HEK293 (cell line): ENCODE measurements at regions of chr16 and their contacts with region 1.

Region 1: DNA sequence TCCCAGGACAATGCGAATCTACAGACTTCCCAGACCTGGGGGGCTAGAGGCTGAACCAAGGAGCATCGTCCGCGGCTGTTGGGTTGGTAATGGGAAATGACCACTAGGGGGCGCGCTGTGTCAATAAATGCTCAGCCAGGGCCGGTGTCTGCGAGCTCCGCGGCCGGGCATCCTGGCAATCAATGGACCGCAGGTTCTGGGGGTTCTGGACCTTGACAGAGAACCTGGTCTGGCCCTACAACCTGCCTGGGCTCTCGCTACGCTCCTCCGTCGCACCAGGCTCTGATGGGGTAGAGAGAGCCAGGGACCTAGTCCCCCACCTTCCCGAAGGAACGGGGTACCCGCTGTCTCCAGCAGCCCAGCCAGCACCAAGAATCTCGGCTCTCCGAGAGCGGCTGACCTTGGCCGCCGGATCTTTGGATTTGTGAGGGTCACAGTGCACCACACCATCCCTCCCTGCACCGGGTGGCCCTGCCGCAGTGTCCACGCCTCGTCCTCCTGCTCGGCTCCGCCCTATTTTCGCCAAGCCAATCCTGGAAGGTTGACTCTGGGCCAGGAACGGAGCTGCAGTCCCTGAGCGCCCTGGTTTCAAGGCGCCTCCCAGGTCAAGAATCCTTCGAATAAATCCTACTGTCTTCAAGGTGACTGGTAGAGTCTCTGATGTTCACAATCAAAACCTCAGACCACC is 20.4 kb upstream of the BEAN1 start:
- H3K4me3 ChIP-seq: peak overlapping the region; percentile 51
- H3K27ac ChIP-seq: no peak overlapping the region
- H3K4me1 ChIP-seq: no peaks in the 10 kb centered on the region; the same call in 1 of the 2 replicates
- CTCF ChIP-seq: peak; percentile 93

Region 2: DNA sequence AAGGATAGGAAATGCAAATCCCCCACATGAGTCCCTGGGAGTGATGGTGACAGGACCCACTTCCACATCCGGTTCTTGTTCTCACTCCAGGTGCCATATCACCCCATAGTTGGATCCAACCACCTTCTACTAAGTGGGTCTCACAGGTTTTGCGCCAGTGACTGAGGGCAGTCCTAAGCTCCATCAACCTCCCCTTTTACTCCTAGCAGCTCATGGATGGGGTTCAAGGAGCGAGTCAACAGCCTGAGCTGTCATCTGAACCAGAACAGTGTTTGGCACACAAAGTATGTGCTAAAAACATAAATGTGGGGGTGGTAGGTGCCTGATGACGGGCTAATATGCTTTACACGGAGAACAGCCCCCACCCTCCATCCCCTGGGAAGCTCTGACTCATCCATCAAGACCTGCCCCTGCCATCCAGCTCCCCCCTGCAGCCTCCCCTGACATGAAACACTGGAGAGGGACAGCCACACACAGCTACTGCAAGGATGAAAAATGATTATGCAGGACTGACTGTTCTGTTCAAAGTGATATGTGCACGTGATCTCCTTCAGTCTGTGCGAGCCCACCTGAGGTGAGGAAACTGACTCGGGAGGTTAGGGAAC is 183.4 kb before region 1 on chr16:
- CTCF ChIA-PET with region 1: no interaction called
- POLR2A ChIA-PET with region 1: no interaction called
- H3K4me3 ChIP-seq: no peak overlapping the region
- H3K27ac ChIP-seq: no peak overlapping the region
- H3K4me1 ChIP-seq: no peaks in the 10 kb centered on the region
- CTCF ChIP-seq: no peak

Region 3: DNA sequence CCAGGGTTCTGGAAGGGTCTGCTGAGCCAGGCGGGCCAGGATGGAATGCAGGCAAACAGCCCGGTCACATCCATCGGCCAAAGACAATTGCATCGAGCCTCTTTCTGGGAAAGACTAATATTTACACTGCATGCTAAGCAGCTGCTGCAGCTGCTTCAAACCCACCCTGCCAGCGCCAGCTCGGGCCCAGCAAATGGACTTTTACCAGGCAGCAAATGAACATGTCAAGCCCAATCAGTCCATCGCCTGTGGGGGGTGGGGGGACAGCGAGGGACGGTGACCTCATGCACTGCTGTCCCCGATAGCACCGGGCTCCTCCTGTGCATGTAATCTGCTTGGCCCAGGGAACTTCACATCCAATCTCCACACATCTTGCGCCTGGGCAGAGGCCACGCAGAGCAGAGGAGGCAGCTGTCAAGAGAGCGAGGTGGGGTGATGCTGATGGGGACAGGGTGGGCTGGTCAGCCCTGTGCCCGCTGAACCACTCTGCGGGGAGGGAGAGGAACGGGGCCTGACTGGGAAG is 79.6 kb before region 1 on chr16:
- CTCF ChIA-PET with region 1: no interaction called
- POLR2A ChIA-PET with region 1: no interaction called
- H3K4me3 ChIP-seq: no peak overlapping the region
- H3K27ac ChIP-seq: no peak overlapping the region
- H3K4me1 ChIP-seq: no peaks in the 10 kb centered on the region
- CTCF ChIP-seq: no peak

Region 4: GRCh38 chr16:66357153-66357928 is 49.3 kb before region 1 on chr16:
- CTCF ChIA-PET with region 1: interaction called, 26 read pairs
- POLR2A ChIA-PET with region 1: no interaction called
- H3K4me3 ChIP-seq: no peak overlapping the region
- H3K27ac ChIP-seq: no peak overlapping the region
- H3K4me1 ChIP-seq: no peaks in the 10 kb centered on the region
- CTCF ChIP-seq: peak; percentile 30; the same call in 1 of the 2 replicates

Region 5: GRCh38 chr16:66416939-66417700 is 10.4 kb after region 1 on chr16:
- CTCF ChIA-PET with region 1: interaction called, 11 read pairs
- POLR2A ChIA-PET with region 1: no interaction called
- H3K4me3 ChIP-seq: no peak overlapping the region
- H3K27ac ChIP-seq: no peak overlapping the region
- H3K4me1 ChIP-seq: no peaks in the 10 kb centered on the region
- CTCF ChIP-seq: no peak

Region 6: GRCh38 chr16:66474750-66475199 is 68.1 kb after region 1 on chr16:
- CTCF ChIA-PET with region 1: interaction called, 31 read pairs
- POLR2A ChIA-PET with region 1: interaction called, 5 read pairs
- H3K4me3 ChIP-seq: no peak overlapping the region
- H3K27ac ChIP-seq: no peak overlapping the region
- H3K4me1 ChIP-seq: peaks cover 6% of the 10 kb centered on the region
- CTCF ChIP-seq: no peak

Region 7: GRCh38 chr16:66483689-66484481 is 77.2 kb after region 1 on chr16:
- CTCF ChIA-PET with region 1: interaction called, 55 read pairs
- POLR2A ChIA-PET with region 1: no interaction called
- H3K4me3 ChIP-seq: no peak overlapping the region
- H3K27ac ChIP-seq: no peak overlapping the region
- H3K4me1 ChIP-seq: no peaks in the 10 kb centered on the region
- CTCF ChIP-seq: peak; percentile 93